ENCODE measurements at regions of chr2 and their contacts with region 1.

Region 1: GRCh38 chr2:46364797-46365457 is 67.7 kb downstream of the EPAS1 start:
- DNase-seq: peak; percentile 9
- H3K4me3 ChIP-seq: no peak overlapping the region
- H3K27me3 ChIP-seq: no peaks in the 10 kb centered on the region
- CTCF ChIP-seq: peak; percentile 74

Region 2: DNA sequence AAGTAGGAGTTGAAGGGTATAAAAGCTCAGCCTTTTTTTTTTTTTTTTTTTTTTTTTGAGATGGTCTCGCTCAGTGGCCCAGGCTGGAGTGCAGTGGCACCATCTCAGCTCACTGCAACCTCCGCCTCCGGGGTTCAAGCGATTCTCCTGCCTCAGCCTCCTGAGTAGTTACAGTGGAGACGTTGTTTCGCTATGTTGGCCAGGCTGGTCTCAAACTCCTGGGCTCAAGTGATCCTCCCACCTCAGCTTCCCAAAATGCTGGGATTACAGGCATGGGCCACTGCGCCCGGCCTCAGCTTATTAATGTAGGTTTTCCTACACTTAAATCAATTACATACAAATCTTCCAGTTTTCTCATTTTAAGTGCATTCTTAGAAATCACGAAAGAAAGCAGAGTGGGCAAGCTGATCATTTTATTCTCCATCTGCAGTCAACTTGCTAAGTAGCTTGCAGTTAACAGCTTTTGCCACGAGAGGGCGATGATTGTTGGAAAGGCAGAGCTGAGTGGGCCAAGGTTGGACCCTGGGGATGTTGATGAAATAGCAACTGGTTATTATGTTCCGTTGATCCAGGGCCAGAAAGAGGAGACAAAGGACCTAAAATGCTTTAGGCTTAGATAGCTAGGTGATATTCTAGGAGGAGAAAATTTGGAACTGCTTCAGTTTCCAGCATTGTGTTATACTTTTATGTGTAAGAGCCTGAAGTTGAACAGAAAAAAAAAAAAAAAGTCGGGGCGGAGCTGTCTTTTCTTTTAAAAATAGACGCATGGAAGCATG is 302.1 kb before region 1 on chr2:
- CTCF ChIA-PET with region 1: interaction called, 10 read pairs
- POLR2A ChIA-PET with region 1: no interaction called
- DNase-seq: no peak
- H3K4me3 ChIP-seq: no peak overlapping the region
- H3K27me3 ChIP-seq: no peaks in the 10 kb centered on the region
- CTCF ChIP-seq: peak; percentile 89

Region 3: GRCh38 chr2:46315103-46315890 is 49.6 kb before region 1 on chr2:
- CTCF ChIA-PET with region 1: no interaction called
- POLR2A ChIA-PET with region 1: no interaction called
- DNase-seq: peak; percentile 86
- H3K4me3 ChIP-seq: no peak overlapping the region
- H3K27me3 ChIP-seq: no peaks in the 10 kb centered on the region
- CTCF ChIP-seq: no peak

Region 4: GRCh38 chr2:46377176-46377581 is 12.3 kb after region 1 on chr2:
- CTCF ChIA-PET with region 1: interaction called, 25 read pairs
- POLR2A ChIA-PET with region 1: no interaction called
- DNase-seq: no peak
- H3K4me3 ChIP-seq: no peak overlapping the region
- H3K27me3 ChIP-seq: no peaks in the 10 kb centered on the region
- CTCF ChIP-seq: no peak

Region 5: GRCh38 chr2:46580416-46580815 is 215.5 kb after region 1 on chr2:
- CTCF ChIA-PET with region 1: no interaction called
- POLR2A ChIA-PET with region 1: no interaction called
- DNase-seq: no peak
- H3K4me3 ChIP-seq: no peak overlapping the region
- H3K27me3 ChIP-seq: no peaks in the 10 kb centered on the region
- CTCF ChIP-seq: no peak